Posterior vena cava (tissue), 2 donors: ENCODE measurements at regions of chr17 and their contacts with region 1.

Region 1: DNA sequence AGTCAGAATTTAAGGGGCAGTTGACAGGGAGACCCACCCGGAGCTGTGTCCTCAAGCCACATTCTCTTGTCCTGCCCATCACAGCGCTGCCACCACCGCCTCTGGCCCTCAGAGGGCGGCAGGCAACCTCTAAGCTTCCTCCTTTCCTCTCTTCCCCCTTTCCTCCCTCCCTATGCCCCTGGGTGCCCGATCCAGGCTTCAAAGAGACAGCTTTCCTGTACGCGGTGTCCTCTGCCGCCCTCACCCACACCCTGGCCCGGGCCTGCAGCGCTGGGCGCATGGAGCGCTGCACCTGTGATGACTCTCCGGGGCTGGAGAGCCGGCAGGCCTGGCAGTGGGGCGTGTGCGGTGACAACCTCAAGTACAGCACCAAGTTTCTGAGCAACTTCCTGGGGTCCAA is 23.5 kb downstream of the WNT9B start:
- DNase-seq: no peak

Region 2: GRCh38 chr17:46822388-46822921 is 52.5 kb before region 1 on chr17:
- intact Hi-C with region 1: no loop called
- DNase-seq: no peak

Region 3: DNA sequence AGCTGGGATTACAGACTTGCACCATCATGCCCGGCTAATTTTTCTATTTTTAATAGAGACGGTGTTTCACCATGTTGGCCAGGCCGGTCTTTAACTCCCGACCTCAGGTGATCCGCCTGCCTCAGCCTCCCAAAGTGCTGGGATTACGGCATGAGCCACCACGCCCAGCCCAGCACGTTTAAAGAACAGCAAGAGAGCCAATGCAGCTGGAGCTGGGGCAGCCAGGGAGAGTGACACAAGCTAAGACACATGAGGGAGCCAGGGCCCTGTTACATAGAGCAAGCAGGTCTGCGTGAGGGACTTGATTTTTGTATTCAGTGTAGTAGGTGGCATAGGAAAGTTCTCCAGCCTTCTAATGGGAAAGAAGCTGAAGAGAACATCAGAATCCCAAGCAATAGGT is 26.4 kb after region 1 on chr17:
- intact Hi-C with region 1: loop called in 1 of 2 experiments (anchors 1 kb)
- DNase-seq: peak; percentile 68